Astrocyte of the cerebellum (primary cell): ENCODE measurements at regions of chr2 and their contacts with region 1.

Region 1: DNA sequence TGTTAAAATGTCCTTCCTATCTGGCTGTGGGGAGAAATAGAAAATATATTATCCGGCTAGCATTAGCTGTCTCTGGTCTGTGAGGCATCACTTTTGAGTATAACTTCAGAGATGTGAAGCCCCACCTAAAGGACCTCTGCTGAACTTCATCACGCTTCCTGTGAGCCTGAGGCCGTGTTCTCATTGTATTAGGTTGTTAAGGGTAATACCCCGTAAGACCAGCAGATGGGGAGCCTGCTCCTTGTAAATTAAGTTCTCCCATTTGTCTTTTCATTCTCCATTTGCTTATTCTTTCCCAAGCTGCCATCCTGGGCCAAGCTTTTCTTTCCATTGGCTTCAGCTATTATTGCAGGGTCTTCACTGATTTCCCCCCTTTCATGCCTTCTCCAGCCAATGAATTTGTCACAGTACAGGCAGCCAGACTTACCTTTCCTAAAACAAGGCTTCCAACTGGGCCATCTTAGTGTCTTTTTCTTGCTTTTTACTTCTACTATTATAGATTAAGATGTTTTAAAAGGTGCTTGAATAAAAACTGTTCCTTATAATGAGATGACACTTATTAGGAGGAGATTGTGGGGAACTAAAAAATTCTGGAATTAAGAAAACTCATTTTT is 12.4 kb downstream of the NIF3L1 start:
- DNase-seq: peak; percentile 89
- H3K4me3 ChIP-seq: no peak overlapping the region
- CTCF ChIP-seq: peak; percentile 85

Region 2: DNA sequence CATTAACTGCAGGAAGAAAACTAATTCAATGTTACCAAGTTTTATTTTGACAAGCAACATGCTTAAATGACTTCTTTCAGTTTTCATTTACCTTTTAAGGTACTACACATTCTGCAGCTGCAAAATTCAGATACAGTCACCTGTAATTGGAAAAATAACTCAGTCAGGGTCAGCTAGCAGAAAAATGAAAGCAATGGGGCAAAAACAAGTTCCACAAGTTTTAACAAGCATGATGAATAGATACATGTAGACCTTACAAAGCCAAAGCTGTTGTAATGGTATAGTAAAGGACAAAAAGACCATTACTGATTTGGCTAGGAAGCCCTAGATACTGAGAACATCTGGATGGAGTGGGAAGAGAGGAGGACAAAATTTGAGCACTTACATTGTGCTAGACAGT is 57.7 kb after region 1 on chr2:
- in situ Hi-C with region 1: no loop called
- DNase-seq: no peak
- H3K4me3 ChIP-seq: no peak overlapping the region
- CTCF ChIP-seq: no peak

Region 3: GRCh38 chr2:201182650-201183364 is 281.2 kb after region 1 on chr2 and contains the start of gene CASP10:
- in situ Hi-C with region 1: loop called (anchors 10 kb)
- DNase-seq: no peak
- H3K4me3 ChIP-seq: no peak within 1 kb of the TSS
- CTCF ChIP-seq: no peak